ENCODE measurements at regions of chrX and their contacts with region 1.

Region 1: DNA sequence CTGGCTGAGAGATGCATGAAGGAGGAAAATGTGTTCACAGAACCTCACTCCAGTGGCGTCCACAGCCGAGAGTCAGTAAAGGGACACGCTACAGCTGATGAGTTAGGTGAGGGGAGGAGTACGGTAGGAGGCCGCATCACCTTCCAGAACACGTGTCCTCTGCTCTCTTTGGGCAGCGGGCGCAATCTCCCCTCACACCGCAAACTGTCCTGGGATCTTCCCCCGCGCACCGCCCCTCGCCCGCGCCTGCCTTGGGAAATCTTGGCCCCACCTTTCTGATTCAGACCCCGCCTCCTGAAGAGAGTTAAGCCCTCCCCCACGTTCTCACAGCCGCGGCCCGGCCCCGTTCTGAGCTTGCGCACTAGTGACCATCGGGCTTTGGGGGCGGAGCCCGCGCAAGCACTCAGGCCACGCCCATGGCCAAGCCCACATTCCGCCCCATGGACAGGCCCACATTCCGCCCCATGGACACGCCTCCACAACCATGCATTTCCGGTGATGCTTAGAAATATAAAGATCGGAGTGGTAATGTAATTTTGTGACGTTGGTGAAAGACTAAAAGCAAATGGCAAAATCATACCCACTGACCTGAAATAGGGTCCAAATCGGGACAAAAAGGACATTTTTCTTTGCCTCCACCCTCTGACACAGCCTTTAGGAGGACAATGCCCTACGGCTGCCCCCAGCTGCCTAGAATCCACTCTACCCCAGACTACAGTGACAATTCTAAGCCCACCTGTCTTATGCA is 13.3 kb downstream of the SMIM10 start:
- DNase-seq: peak; percentile 93
- H3K4me3 Mint-ChIP-seq: peak overlapping the region; percentile 77
- H3K27ac Mint-ChIP-seq: peak overlapping the region; percentile 54
- H3K4me1 Mint-ChIP-seq: no peaks in the 10 kb centered on the region
- H3K27me3 Mint-ChIP-seq: no peaks in the 10 kb centered on the region

Region 2: DNA sequence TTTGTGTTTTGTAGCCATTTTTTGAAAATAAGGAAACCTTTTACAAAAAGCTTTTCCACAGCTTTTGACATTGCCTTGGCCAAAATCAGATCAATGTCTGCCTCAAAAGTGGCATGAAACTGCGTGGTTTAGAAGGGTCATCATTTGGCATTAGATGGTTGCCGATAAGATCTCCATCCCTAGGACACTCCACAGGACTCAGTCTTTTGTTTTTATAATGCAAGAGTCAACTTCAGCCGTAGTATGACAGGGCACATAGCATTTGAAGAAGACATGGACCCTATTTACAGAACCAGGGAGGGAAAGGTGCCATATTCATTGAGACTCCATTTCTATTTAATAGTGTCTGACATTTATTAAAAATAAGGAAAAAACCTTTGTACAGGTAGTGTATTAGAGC is 46.6 kb after region 1 on chrX:
- CTCF ChIA-PET with region 1: no interaction called
- POLR2A ChIA-PET with region 1: no interaction called
- intact Hi-C with region 1: loop called (anchors 1 kb)
- DNase-seq: no peak
- H3K4me3 Mint-ChIP-seq: peak overlapping the region; percentile 79
- H3K27ac Mint-ChIP-seq: no peak overlapping the region
- H3K4me1 Mint-ChIP-seq: peaks cover 24% of the 10 kb centered on the region
- H3K27me3 Mint-ChIP-seq: no peaks in the 10 kb centered on the region

Region 3: GRCh38 chrX:135086197-135086854 is 82.3 kb after region 1 on chrX:
- CTCF ChIA-PET with region 1: interaction called, 3 read pairs
- POLR2A ChIA-PET with region 1: no interaction called
- intact Hi-C with region 1: loop called (anchors 2 kb)
- DNase-seq: peak; percentile 48
- H3K4me3 Mint-ChIP-seq: no peak overlapping the region
- H3K27ac Mint-ChIP-seq: peak overlapping the region; percentile 13
- H3K4me1 Mint-ChIP-seq: peaks cover 6% of the 10 kb centered on the region
- H3K27me3 Mint-ChIP-seq: peaks cover 1% of the 10 kb centered on the region